Gastrocnemius medialis (tissue), 4 donors: ENCODE measurements at regions of chr4 and their contacts with region 1.

Region 1: GRCh38 chr4:129362674-129363274 is 266.8 kb downstream of the C4orf33 start:
- DNase-seq: peak in 1 of 2 donors; percentile 12
- ATAC-seq: no peak
- H3K4me3 ChIP-seq: no peak overlapping the region
- H3K27ac ChIP-seq: no peak overlapping the region
- H3K4me1 ChIP-seq: no peaks in the 10 kb centered on the region
- H3K27me3 ChIP-seq: no peaks in the 10 kb centered on the region
- CTCF ChIP-seq: peak; percentile 48 to 82 (median 61)
- POLR2A ChIP-seq: no peak

Region 2: GRCh38 chr4:128454281-128455075 is 908.3 kb before region 1 on chr4:
- in situ Hi-C with region 1: no loop called
- intact Hi-C with region 1: no loop called
- DNase-seq: peak; percentile 70 to 81
- ATAC-seq: peak; percentile 93 to 94
- H3K4me3 ChIP-seq: no peak overlapping the region
- H3K27ac ChIP-seq: peak overlapping the region in 2 of 4 donors; percentile 9
- H3K4me1 ChIP-seq: peaks cover 17 to 20% of the 10 kb centered on the region in 2 donors
- H3K27me3 ChIP-seq: no peaks in the 10 kb centered on the region
- CTCF ChIP-seq: peak; percentile 50 to 80 (median 71)
- POLR2A ChIP-seq: no peak

Region 3: GRCh38 chr4:129140521-129140920 is 222.3 kb before region 1 on chr4:
- in situ Hi-C with region 1: no loop called
- intact Hi-C with region 1: no loop called
- DNase-seq: no peak
- ATAC-seq: no peak
- H3K4me3 ChIP-seq: no peak overlapping the region
- H3K27ac ChIP-seq: no peak overlapping the region
- H3K4me1 ChIP-seq: no peaks in the 10 kb centered on the region
- H3K27me3 ChIP-seq: no peaks in the 10 kb centered on the region
- CTCF ChIP-seq: no peak
- POLR2A ChIP-seq: no peak

Region 4: DNA sequence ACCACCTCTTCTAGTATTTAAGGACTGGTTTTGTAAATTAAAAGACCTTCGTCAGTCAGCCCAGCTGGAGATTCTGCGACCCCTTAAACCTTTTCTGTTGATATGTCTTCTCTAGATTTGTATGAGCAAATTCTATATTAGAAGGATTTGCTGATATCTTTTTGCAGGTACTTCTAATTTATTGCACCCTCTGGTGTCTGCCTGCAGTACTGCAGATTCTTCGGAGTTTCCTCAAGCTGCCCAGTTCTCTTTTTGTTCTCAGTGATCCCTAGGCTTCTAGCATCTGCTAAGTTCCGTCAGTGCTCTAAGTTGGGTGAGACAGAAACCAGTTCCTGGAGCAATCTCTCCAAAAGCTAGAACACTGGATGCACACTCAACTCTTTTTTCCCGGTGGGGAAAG is 278.4 kb after region 1 on chr4:
- in situ Hi-C with region 1: loop called (anchors 5 to 10 kb)
- intact Hi-C with region 1: loop called (anchors 2 kb)
- DNase-seq: peak; percentile 4 to 22
- ATAC-seq: peak in 1 of 2 donors; percentile 24
- H3K4me3 ChIP-seq: no peak overlapping the region
- H3K27ac ChIP-seq: no peak overlapping the region
- H3K4me1 ChIP-seq: no peaks in the 10 kb centered on the region
- H3K27me3 ChIP-seq: no peaks in the 10 kb centered on the region
- CTCF ChIP-seq: peak; percentile 37 to 76 (median 57)
- POLR2A ChIP-seq: no peak